CD8-positive, alpha-beta T cell (primary cell): ENCODE measurements at regions of chr17 and their contacts with region 1.

Region 1: GRCh38 chr17:30824356-30825145 is at the start of gene CRLF3:
- DNase-seq: peak; percentile 80 to 96 (median 88)
- ATAC-seq: peak; percentile 90
- H3K4me3 ChIP-seq: peak within 1 kb of the TSS; percentile 82 to 96
- H3K4me3 Mint-ChIP-seq: peak within 1 kb of the TSS; percentile 92
- H3K27ac ChIP-seq: peak within 1 kb of the TSS; percentile 79 to 87
- H3K27ac Mint-ChIP-seq: peak within 1 kb of the TSS; percentile 88
- H3K4me1 ChIP-seq: peaks cover 42% of the 10 kb centered on the region
- H3K4me1 Mint-ChIP-seq: peaks cover 42% of the 10 kb centered on the region
- H3K27me3 ChIP-seq: no peaks in the 10 kb centered on the region
- H3K27me3 Mint-ChIP-seq: no peaks in the 10 kb centered on the region
- CTCF ChIP-seq: peak; percentile 62
- total RNA-seq, gene CRLF3: 60.5 to 60.7 TPM

Region 2: DNA sequence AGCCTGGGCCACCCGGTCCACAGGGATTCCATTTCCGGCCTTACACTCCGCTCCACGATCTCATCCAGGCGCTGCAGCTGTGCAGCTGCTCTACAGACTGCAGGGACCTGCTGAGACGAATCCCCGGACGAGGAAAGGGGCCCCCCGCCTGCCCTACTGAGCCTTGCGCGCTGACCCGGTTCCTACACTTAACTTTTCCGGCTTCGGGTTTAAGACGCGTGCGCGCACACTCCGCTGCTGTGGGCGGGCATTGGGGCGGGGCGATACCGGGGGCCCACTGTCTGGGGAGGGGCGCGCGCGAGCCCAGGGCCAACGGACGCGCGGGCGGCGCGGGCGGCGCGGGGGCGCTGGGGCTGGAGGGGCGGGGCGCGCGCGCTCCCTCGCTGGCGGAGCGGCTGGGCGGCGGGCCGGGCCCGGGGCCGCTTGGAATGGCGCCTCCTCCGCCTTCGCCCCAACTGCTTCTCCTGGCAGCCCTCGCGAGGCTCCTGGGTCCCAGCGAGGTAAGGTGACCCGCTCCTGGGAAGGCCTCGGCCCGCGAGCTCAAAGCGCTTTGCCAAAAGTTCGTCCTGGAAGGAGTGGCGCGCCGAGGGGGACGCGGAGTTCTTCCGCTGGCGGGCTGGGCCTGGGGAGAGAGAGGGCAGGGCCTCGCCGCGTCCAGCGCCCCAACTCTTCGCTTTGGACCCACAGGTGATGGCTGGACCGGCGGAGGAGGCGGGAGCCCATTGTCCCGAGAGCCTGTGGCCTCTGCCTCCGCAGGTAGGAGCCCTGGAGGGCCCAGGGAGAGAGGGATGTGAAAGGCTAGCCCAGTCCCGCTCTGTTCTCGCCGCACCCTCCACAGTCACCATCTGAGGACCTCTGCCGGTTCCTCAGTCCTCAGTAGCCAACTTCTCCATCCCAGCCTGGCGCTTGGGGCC is 1256.0 kb before region 1 on chr17 and contains the start of gene TP53I13:
- CTCF ChIA-PET with region 1: no interaction called
- POLR2A ChIA-PET with region 1: no interaction called
- intact Hi-C with region 1: loop called in 1 of 2 experiments (anchors 5 kb)
- DNase-seq: peak; percentile 71 to 95 (median 91)
- ATAC-seq: peak; percentile 57
- H3K4me3 ChIP-seq: peak within 1 kb of the TSS; percentile 66 to 94
- H3K4me3 Mint-ChIP-seq: peak within 1 kb of the TSS; percentile 94
- H3K27ac ChIP-seq: peak within 1 kb of the TSS; percentile 53 to 78
- H3K27ac Mint-ChIP-seq: peak within 1 kb of the TSS; percentile 86
- H3K4me1 ChIP-seq: peaks cover 30% of the 10 kb centered on the region
- H3K4me1 Mint-ChIP-seq: peaks cover 41% of the 10 kb centered on the region
- H3K27me3 ChIP-seq: no peaks in the 10 kb centered on the region
- H3K27me3 Mint-ChIP-seq: no peaks in the 10 kb centered on the region
- CTCF ChIP-seq: no peak
- total RNA-seq, gene TP53I13: 50.2 to 54.1 TPM

Region 3: GRCh38 chr17:30378824-30379302 is 445.7 kb before region 1 on chr17 and contains the start of gene CPD:
- CTCF ChIA-PET with region 1: no interaction called
- POLR2A ChIA-PET with region 1: no interaction called
- intact Hi-C with region 1: loop called in 1 of 2 experiments (anchors 2 kb)
- DNase-seq: peak; percentile 92 to 99 (median 98)
- ATAC-seq: peak; percentile 93
- H3K4me3 ChIP-seq: peak within 1 kb of the TSS; percentile 51 to 76
- H3K4me3 Mint-ChIP-seq: peak within 1 kb of the TSS; percentile 88
- H3K27ac ChIP-seq: peak within 1 kb of the TSS; percentile 65 to 94
- H3K27ac Mint-ChIP-seq: peak within 1 kb of the TSS; percentile 93
- H3K4me1 ChIP-seq: peaks cover 53% of the 10 kb centered on the region
- H3K4me1 Mint-ChIP-seq: peaks cover 56% of the 10 kb centered on the region
- H3K27me3 ChIP-seq: no peaks in the 10 kb centered on the region
- H3K27me3 Mint-ChIP-seq: no peaks in the 10 kb centered on the region
- CTCF ChIP-seq: no peak
- total RNA-seq, gene CPD: 40.9 to 42.1 TPM

Region 4: GRCh38 chr17:30716461-30717300 is 107.9 kb before region 1 on chr17:
- CTCF ChIA-PET with region 1: interaction called, 3 read pairs
- POLR2A ChIA-PET with region 1: no interaction called
- intact Hi-C with region 1: loop called in 1 of 2 experiments (anchors 5 kb)
- DNase-seq: no peak
- ATAC-seq: no peak
- H3K4me3 ChIP-seq: no peak overlapping the region
- H3K4me3 Mint-ChIP-seq: no peak overlapping the region
- H3K27ac ChIP-seq: no peak overlapping the region
- H3K27ac Mint-ChIP-seq: no peak overlapping the region
- H3K4me1 ChIP-seq: no peaks in the 10 kb centered on the region
- H3K4me1 Mint-ChIP-seq: peaks cover 8% of the 10 kb centered on the region
- H3K27me3 ChIP-seq: no peaks in the 10 kb centered on the region
- H3K27me3 Mint-ChIP-seq: no peaks in the 10 kb centered on the region
- CTCF ChIP-seq: no peak

Region 5: GRCh38 chr17:30796016-30796415 is 28.5 kb before region 1 on chr17:
- CTCF ChIA-PET with region 1: interaction called, 10 read pairs
- POLR2A ChIA-PET with region 1: interaction called, 5 read pairs
- intact Hi-C with region 1: loop called in 1 of 2 experiments (anchors 5 kb)
- DNase-seq: no peak
- ATAC-seq: no peak
- H3K4me3 ChIP-seq: no peak overlapping the region
- H3K4me3 Mint-ChIP-seq: no peak overlapping the region
- H3K27ac ChIP-seq: peak overlapping the region in 1 of 2 experiments; percentile 36
- H3K27ac Mint-ChIP-seq: peak overlapping the region; percentile 8
- H3K4me1 ChIP-seq: no peaks in the 10 kb centered on the region
- H3K4me1 Mint-ChIP-seq: peaks cover 18% of the 10 kb centered on the region
- H3K27me3 ChIP-seq: no peaks in the 10 kb centered on the region
- H3K27me3 Mint-ChIP-seq: no peaks in the 10 kb centered on the region
- CTCF ChIP-seq: no peak

Region 6: DNA sequence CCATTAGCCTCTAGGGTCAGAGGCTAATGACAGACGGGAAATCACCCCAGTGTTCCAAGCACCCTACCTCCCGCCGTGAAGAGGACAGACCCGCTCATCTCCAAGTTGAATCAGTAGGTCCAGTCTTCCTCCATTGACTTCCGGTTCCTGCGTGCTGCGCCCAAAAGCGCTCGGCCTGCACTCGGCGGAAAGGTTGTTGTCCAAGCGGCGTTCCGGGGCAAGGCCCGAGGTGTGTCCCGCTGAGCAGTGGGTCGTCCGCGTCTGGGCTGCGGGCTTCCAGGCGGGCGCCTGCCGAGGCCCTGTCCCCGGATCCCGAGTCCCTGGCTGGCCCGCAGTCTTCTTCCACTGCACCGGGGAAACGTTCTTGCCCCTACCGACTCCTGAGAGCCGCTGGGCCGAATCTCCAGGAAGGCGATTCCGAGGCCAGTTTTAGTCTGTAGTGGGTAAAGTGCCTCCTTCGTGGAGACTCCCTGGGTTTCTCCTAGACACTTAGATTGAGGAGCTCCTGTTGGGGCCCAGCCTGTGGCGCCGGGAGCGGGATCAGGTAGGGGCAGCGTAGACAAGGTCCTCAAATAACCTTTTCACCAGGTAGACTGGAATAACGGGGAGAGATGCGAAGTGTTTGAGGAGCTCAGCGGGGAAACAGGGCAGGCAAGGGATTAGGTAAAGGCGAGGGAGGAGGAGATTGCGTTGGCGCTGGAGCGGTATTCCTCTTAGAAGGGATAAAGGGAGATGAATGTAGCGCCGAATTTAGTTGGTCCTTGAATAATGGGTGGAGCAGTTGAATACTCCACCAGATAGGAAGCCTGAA is 81.8 kb after region 1 on chr17 and contains the start of gene TEFM:
- CTCF ChIA-PET with region 1: no interaction called
- POLR2A ChIA-PET with region 1: no interaction called
- intact Hi-C with region 1: loop called in 1 of 2 experiments (anchors 1 kb)
- DNase-seq: peak; percentile 77 to 94 (median 85)
- ATAC-seq: peak; percentile 96
- H3K4me3 ChIP-seq: peak within 1 kb of the TSS; percentile 88
- H3K4me3 Mint-ChIP-seq: peak within 1 kb of the TSS; percentile 94
- H3K27ac ChIP-seq: peak within 1 kb of the TSS; percentile 78 to 85
- H3K27ac Mint-ChIP-seq: peak within 1 kb of the TSS; percentile 92
- H3K4me1 ChIP-seq: peaks cover 14% of the 10 kb centered on the region
- H3K4me1 Mint-ChIP-seq: peaks cover 45% of the 10 kb centered on the region
- H3K27me3 ChIP-seq: no peaks in the 10 kb centered on the region
- H3K27me3 Mint-ChIP-seq: no peaks in the 10 kb centered on the region
- CTCF ChIP-seq: no peak
- total RNA-seq, gene TEFM: 8.4 to 8.9 TPM

Region 7: DNA sequence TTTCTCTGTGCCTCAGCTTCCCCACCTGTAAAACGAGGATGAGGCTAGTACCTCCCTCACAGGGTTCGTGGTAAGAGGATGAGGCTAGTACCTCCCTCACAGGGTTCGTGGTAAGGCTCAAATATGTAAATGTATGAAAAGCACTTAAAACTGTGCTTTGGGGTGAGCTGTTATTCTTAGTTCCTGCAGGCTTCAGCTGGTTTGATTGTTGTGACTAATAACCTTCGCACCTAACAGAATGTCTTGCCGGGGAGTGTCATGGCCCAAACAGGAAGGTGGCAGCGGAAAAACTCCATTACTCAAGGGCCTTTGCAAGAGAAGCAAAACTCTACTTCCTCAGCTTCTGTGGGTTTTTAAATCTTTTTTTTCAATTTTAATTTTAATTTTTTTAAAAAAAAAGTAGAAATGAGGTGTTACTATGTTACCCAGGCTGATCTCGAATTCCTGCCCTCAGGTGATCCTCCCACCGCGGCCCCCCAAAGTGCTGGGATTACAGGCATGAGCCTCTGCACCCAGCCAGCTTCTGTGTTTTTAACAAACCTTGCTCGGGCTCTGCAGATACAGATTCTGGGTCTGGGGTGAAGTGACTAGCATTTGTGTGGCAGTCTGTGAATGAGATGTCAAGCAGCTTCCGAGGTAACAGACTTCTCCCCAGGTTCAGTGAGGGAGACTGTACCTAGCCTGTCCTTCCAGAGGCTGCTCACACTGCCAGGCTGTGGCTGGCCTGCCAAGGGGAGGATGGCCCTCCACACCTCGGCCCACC is 669.9 kb after region 1 on chr17:
- CTCF ChIA-PET with region 1: no interaction called
- POLR2A ChIA-PET with region 1: no interaction called
- intact Hi-C with region 1: loop called in 1 of 2 experiments (anchors 5 kb)
- DNase-seq: peak in 8 of 9 experiments; percentile 53 to 91 (median 72)
- ATAC-seq: peak; percentile 81
- H3K4me3 ChIP-seq: peak overlapping the region in 1 of 2 experiments; percentile 20
- H3K4me3 Mint-ChIP-seq: peak overlapping the region; percentile 76
- H3K27ac ChIP-seq: peak overlapping the region; percentile 76 to 89
- H3K27ac Mint-ChIP-seq: peak overlapping the region; percentile 97
- H3K4me1 ChIP-seq: peaks cover 97% of the 10 kb centered on the region
- H3K4me1 Mint-ChIP-seq: peaks cover 97% of the 10 kb centered on the region
- H3K27me3 ChIP-seq: no peaks in the 10 kb centered on the region
- H3K27me3 Mint-ChIP-seq: no peaks in the 10 kb centered on the region
- CTCF ChIP-seq: no peak